Activated T-helper 2 cell treated with anti-CD3 and anti-CD28 coated beads, Interferon-gamma antibody, Interleukin-2, Interleukin-4, amounts not matched to agents 10 μg/mL and 5 μg/mL and 100 μg/mL, durations not matched to agents 14 hours and 24 hours and 36 hours (primary cell): ENCODE measurements at regions of chr3 and their contacts with region 1.

Region 1: GRCh38 chr3:10248184-10249080 is at the start of gene TATDN2:
- DNase-seq: peak; percentile 94
- H3K4me3 Mint-ChIP-seq: peak within 1 kb of the TSS; percentile 95
- H3K27ac Mint-ChIP-seq: peak within 1 kb of the TSS; percentile 97
- H3K4me1 Mint-ChIP-seq: peaks cover 47% of the 10 kb centered on the region
- H3K27me3 Mint-ChIP-seq: no peaks in the 10 kb centered on the region
- total RNA-seq, gene TATDN2: 64.9 and 65.6 TPM in 2 replicates

Region 2: GRCh38 chr3:10142707-10143566 is 105.5 kb before region 1 on chr3:
- intact Hi-C with region 1: loop called (anchors 2 kb)
- DNase-seq: no peak
- H3K4me3 Mint-ChIP-seq: peak overlapping the region; percentile 94
- H3K27ac Mint-ChIP-seq: peak overlapping the region; percentile 92
- H3K4me1 Mint-ChIP-seq: peaks cover 24% of the 10 kb centered on the region
- H3K27me3 Mint-ChIP-seq: no peaks in the 10 kb centered on the region